ENCODE measurements at regions of chr1 and their contacts with region 1.

Region 1: GRCh38 chr1:105485207-105485606 is 1571.3 kb upstream of the PRMT6 start:
- DNase-seq: no peak
- H3K4me3 ChIP-seq: no peak overlapping the region
- H3K27ac ChIP-seq: no peak overlapping the region
- H3K4me1 ChIP-seq: no peaks in the 10 kb centered on the region
- H3K27me3 ChIP-seq: no peaks in the 10 kb centered on the region
- CTCF ChIP-seq: no peak
- POLR2A ChIP-seq: no peak

Region 2: DNA sequence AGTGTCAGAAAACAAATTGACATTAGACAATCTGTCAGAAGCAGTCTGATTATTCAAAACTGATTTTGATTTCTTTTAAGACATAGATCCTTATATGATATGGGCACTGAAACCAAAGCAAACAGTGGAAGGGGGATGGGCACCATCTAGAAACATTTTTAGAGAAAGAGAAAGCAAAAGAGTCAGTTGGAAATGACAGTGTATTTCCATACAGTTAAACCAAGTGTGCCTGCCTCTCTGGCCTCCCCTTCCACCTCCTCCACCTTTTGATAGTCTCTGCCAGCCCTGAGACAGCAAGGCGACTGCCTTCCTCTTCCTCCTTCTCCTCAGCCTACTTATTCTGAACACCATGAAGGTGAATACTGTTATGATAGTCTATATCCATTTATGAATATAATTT is 785.8 kb before region 1 on chr1:
- intact Hi-C with region 1: loop called (anchors 5 kb)
- DNase-seq: no peak
- H3K4me3 ChIP-seq: no peak overlapping the region
- H3K27ac ChIP-seq: no peak overlapping the region
- H3K4me1 ChIP-seq: no peaks in the 10 kb centered on the region
- H3K27me3 ChIP-seq: no peaks in the 10 kb centered on the region
- CTCF ChIP-seq: no peak
- POLR2A ChIP-seq: no peak

Measured in breast epithelium (tissue), 4 donors.